CD8-positive, alpha-beta T cell (primary cell): ENCODE measurements at regions of chr22 and their contacts with region 1.

Region 1: GRCh38 chr22:41091132-41092022 is 1.0 kb upstream of the EP300 start:
- DNase-seq: peak; percentile 99 to 100 (median 99)
- ATAC-seq: peak; percentile 88
- H3K4me3 ChIP-seq: peak overlapping the region; percentile 91 to 97
- H3K4me3 Mint-ChIP-seq: peak overlapping the region; percentile 99
- H3K27ac ChIP-seq: peak overlapping the region; percentile 93 to 96
- H3K27ac Mint-ChIP-seq: peak overlapping the region; percentile 100
- H3K4me1 ChIP-seq: peaks cover 16% of the 10 kb centered on the region
- H3K4me1 Mint-ChIP-seq: peaks cover 31% of the 10 kb centered on the region
- H3K27me3 ChIP-seq: no peaks in the 10 kb centered on the region
- H3K27me3 Mint-ChIP-seq: no peaks in the 10 kb centered on the region
- CTCF ChIP-seq: no peak

Region 2: GRCh38 chr22:40818747-40819598 is 272.4 kb before region 1 on chr22 and contains the start of gene SLC25A17:
- CTCF ChIA-PET with region 1: no interaction called
- POLR2A ChIA-PET with region 1: no interaction called
- intact Hi-C with region 1: loop called in 1 of 2 experiments (anchors 1 kb)
- DNase-seq: peak; percentile 72 to 93 (median 88)
- ATAC-seq: peak; percentile 88
- H3K4me3 ChIP-seq: peak within 1 kb of the TSS; percentile 87 to 91
- H3K4me3 Mint-ChIP-seq: peak within 1 kb of the TSS; percentile 96
- H3K27ac ChIP-seq: peak within 1 kb of the TSS; percentile 69 to 81
- H3K27ac Mint-ChIP-seq: peak within 1 kb of the TSS; percentile 88
- H3K4me1 ChIP-seq: peaks cover 18% of the 10 kb centered on the region
- H3K4me1 Mint-ChIP-seq: peaks cover 41% of the 10 kb centered on the region
- H3K27me3 ChIP-seq: no peaks in the 10 kb centered on the region
- H3K27me3 Mint-ChIP-seq: no peaks in the 10 kb centered on the region
- CTCF ChIP-seq: no peak
- total RNA-seq, gene SLC25A17: 3.2 to 4.0 TPM

Region 3: DNA sequence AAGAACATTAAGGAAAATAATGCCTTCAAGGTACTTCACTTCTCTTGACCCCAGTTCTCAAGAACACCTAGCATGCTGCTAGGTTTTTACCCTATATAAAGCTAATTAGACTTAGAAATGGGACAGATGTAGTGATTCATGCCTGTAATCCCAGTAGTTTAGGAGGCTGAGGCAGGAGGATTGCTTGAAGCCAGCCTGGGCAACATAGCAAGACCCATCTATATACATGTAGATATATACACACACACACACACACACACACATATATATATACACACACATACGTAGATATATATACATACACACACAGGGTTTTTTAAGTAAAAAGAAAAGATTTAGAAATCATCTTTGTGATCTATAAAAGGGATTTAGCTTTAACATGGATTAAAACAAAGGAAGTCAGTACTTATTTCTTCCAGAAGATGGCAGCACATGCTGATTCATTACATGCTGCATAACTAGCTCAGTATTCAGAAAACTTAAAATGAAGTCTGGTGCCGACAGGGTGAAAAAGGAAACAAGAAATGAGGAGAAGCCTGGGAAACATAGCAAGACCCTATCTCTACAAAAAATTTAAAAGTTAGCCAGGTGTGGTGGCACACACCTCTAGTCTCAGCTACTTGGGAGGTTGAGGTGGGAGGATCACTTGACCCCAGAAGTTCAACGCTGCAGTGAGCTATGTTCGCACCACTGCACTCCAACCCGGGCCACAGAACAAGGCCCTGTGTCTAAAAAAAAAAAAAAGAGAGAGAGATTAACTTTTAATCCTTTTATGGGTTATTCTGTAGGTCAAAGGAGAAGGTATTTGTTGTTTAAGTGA is 168.7 kb before region 1 on chr22:
- CTCF ChIA-PET with region 1: interaction called, 8 read pairs
- POLR2A ChIA-PET with region 1: interaction called, 15 read pairs
- intact Hi-C with region 1: loop called (anchors 1 kb)
- DNase-seq: peak in 4 of 9 experiments; percentile 1 to 82 (median 50)
- ATAC-seq: peak; percentile 98
- H3K4me3 ChIP-seq: no peak overlapping the region
- H3K4me3 Mint-ChIP-seq: peak overlapping the region; percentile 40
- H3K27ac ChIP-seq: no peak overlapping the region
- H3K27ac Mint-ChIP-seq: peak overlapping the region; percentile 33
- H3K4me1 ChIP-seq: peaks cover 5% of the 10 kb centered on the region
- H3K4me1 Mint-ChIP-seq: peaks cover 3% of the 10 kb centered on the region
- H3K27me3 ChIP-seq: no peaks in the 10 kb centered on the region
- H3K27me3 Mint-ChIP-seq: no peaks in the 10 kb centered on the region
- CTCF ChIP-seq: peak; percentile 80

Region 4: GRCh38 chr22:41106122-41106968 is 15.0 kb after region 1 on chr22:
- CTCF ChIA-PET with region 1: interaction called, 3 read pairs
- POLR2A ChIA-PET with region 1: interaction called, 5 read pairs
- intact Hi-C with region 1: loop called (anchors 2 kb)
- DNase-seq: peak in 1 of 9 experiments; percentile 23
- ATAC-seq: peak; percentile 40
- H3K4me3 ChIP-seq: no peak overlapping the region
- H3K4me3 Mint-ChIP-seq: peak overlapping the region; percentile 0
- H3K27ac ChIP-seq: peak overlapping the region in 1 of 2 experiments; percentile 41
- H3K27ac Mint-ChIP-seq: peak overlapping the region; percentile 58
- H3K4me1 ChIP-seq: peaks cover 37% of the 10 kb centered on the region
- H3K4me1 Mint-ChIP-seq: peaks cover 63% of the 10 kb centered on the region
- H3K27me3 ChIP-seq: no peaks in the 10 kb centered on the region
- H3K27me3 Mint-ChIP-seq: no peaks in the 10 kb centered on the region
- CTCF ChIP-seq: no peak

Region 5: GRCh38 chr22:41204992-41205900 is 113.9 kb after region 1 on chr22 and contains the start of gene L3MBTL2:
- CTCF ChIA-PET with region 1: interaction called, 3 read pairs
- POLR2A ChIA-PET with region 1: no interaction called
- intact Hi-C with region 1: loop called (anchors 1 kb)
- DNase-seq: peak; percentile 96 to 99 (median 98)
- ATAC-seq: peak; percentile 100
- H3K4me3 ChIP-seq: peak within 1 kb of the TSS; percentile 77 to 83
- H3K4me3 Mint-ChIP-seq: peak within 1 kb of the TSS; percentile 97
- H3K27ac ChIP-seq: peak within 1 kb of the TSS; percentile 60 to 83
- H3K27ac Mint-ChIP-seq: peak within 1 kb of the TSS; percentile 96
- H3K4me1 ChIP-seq: peaks cover 9% of the 10 kb centered on the region
- H3K4me1 Mint-ChIP-seq: peaks cover 32% of the 10 kb centered on the region
- H3K27me3 ChIP-seq: peaks cover 0 to 2% of the 10 kb centered on the region in 2 experiments
- H3K27me3 Mint-ChIP-seq: peaks cover 9% of the 10 kb centered on the region
- CTCF ChIP-seq: no peak
- total RNA-seq, gene L3MBTL2: 16.3 to 20.3 TPM

Region 6: GRCh38 chr22:41301105-41302020 is 210.0 kb after region 1 on chr22 and contains the start of gene ZC3H7B:
- CTCF ChIA-PET with region 1: no interaction called
- POLR2A ChIA-PET with region 1: interaction called, 3 read pairs
- intact Hi-C with region 1: loop called (anchors 5 kb)
- DNase-seq: peak; percentile 64 to 94 (median 81)
- ATAC-seq: peak; percentile 93
- H3K4me3 ChIP-seq: peak within 1 kb of the TSS; percentile 81 to 96
- H3K4me3 Mint-ChIP-seq: peak within 1 kb of the TSS; percentile 83
- H3K27ac ChIP-seq: peak within 1 kb of the TSS; percentile 72 to 80
- H3K27ac Mint-ChIP-seq: peak within 1 kb of the TSS; percentile 95
- H3K4me1 ChIP-seq: peaks cover 16% of the 10 kb centered on the region
- H3K4me1 Mint-ChIP-seq: peaks cover 29% of the 10 kb centered on the region
- H3K27me3 ChIP-seq: no peaks in the 10 kb centered on the region
- H3K27me3 Mint-ChIP-seq: no peaks in the 10 kb centered on the region
- CTCF ChIP-seq: peak; percentile 43
- total RNA-seq, gene ZC3H7B: 30.7 to 30.8 TPM

Region 7: GRCh38 chr22:41543854-41544670 is 452.7 kb after region 1 on chr22 and contains the start of gene POLR3H:
- CTCF ChIA-PET with region 1: no interaction called
- POLR2A ChIA-PET with region 1: no interaction called
- intact Hi-C with region 1: loop called in 1 of 2 experiments (anchors 10 kb)
- DNase-seq: peak; percentile 92 to 99 (median 97)
- ATAC-seq: peak; percentile 98
- H3K4me3 ChIP-seq: peak within 1 kb of the TSS; percentile 75 to 95
- H3K4me3 Mint-ChIP-seq: peak within 1 kb of the TSS; percentile 98
- H3K27ac ChIP-seq: peak within 1 kb of the TSS; percentile 82 to 83
- H3K27ac Mint-ChIP-seq: peak within 1 kb of the TSS; percentile 94
- H3K4me1 ChIP-seq: peaks cover 30% of the 10 kb centered on the region
- H3K4me1 Mint-ChIP-seq: peaks cover 40% of the 10 kb centered on the region
- H3K27me3 ChIP-seq: no peaks in the 10 kb centered on the region
- H3K27me3 Mint-ChIP-seq: no peaks in the 10 kb centered on the region
- CTCF ChIP-seq: no peak
- total RNA-seq, gene POLR3H: 11.2 to 11.7 TPM